Breast epithelium (tissue), 4 donors: ENCODE measurements at regions of chr4 and their contacts with region 1.

Region 1: GRCh38 chr4:114603497-114603896 is 4.9 kb downstream of the UGT8 start:
- DNase-seq: no peak
- H3K4me3 ChIP-seq: no peak overlapping the region
- H3K27ac ChIP-seq: no peak overlapping the region
- H3K4me1 ChIP-seq: no peaks in the 10 kb centered on the region
- H3K27me3 ChIP-seq: peaks cover 0 to 5% of the 10 kb centered on the region in 2 donors
- CTCF ChIP-seq: no peak
- POLR2A ChIP-seq: no peak

Region 2: GRCh38 chr4:114025176-114025777 is 578.2 kb before region 1 on chr4:
- intact Hi-C with region 1: no loop called
- DNase-seq: no peak
- H3K4me3 ChIP-seq: no peak overlapping the region
- H3K27ac ChIP-seq: no peak overlapping the region
- H3K4me1 ChIP-seq: no peaks in the 10 kb centered on the region
- H3K27me3 ChIP-seq: no peaks in the 10 kb centered on the region
- CTCF ChIP-seq: no peak
- POLR2A ChIP-seq: no peak

Region 3: DNA sequence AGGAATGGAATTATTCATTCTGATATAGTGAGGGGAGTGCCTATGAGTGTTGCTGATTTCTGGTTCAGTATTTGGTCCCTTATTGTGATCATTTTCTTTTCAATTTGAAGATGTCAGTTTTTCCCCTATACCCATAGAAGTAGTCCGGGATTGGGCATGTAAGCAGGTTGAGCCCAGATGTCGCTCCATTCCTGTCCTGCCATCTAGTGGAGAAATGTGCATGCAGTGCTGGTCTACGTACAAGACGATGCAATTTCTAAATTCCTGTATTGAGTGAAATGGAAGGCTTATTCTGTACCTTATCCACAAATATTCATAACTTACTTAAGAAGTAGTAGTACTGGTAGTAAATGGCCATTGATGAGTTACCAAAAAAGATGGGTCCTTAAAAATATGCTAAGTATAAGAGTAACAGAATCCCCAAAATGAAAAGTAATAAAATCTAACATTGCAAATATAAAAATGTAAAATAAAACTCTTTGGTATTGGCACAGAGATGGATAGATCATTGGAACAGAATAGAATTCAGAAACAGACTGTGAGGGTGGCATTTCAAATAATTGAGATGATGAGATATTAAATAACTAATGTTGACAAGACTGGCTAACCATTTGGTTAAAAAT is 56.0 kb after region 1 on chr4:
- intact Hi-C with region 1: no loop called
- DNase-seq: peak; percentile 47 to 52
- H3K4me3 ChIP-seq: no peak overlapping the region
- H3K27ac ChIP-seq: no peak overlapping the region
- H3K4me1 ChIP-seq: no peaks in the 10 kb centered on the region
- H3K27me3 ChIP-seq: no peaks in the 10 kb centered on the region
- CTCF ChIP-seq: peak; percentile 29 to 54 (median 52)
- POLR2A ChIP-seq: no peak

Region 4: DNA sequence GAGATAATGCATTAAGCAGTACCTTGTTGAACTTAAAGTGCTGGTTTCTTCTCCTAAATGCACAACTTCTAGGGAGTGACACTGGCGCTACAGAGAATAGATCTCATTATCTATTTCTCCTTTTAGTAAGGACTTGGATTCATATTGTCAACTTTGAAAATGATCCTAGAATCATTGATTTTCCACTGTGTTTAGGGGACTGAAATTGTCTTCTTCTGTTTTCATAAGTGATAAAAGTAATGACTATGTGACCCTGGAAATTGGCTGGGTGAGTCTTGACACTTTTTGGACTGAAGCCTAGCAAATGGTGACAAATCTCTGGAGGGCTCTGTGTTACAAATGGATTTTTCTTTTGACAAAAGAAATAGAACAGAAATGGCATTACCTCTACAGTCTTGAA is 342.1 kb after region 1 on chr4:
- intact Hi-C with region 1: loop called (anchors 5 kb)
- DNase-seq: no peak
- H3K4me3 ChIP-seq: no peak overlapping the region
- H3K27ac ChIP-seq: no peak overlapping the region
- H3K4me1 ChIP-seq: no peaks in the 10 kb centered on the region
- H3K27me3 ChIP-seq: no peaks in the 10 kb centered on the region
- CTCF ChIP-seq: no peak
- POLR2A ChIP-seq: no peak

Region 5: DNA sequence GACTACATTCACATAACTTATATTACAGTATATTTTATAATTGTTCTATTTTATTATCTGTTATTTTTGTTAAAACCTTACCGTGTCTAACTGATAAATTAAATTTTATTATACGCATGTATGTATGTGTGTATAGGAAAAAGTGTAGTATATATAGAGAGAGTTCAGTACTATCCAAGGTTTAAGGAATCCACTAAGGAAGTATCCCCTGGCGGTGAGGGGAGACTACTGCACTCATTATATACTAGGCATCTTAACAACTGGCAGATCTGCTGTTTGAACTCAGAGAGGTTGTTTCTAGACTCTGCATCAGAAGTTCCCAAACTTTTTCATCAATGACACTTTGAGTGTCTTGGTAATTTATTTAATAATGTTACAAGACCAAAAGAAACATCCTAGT is 439.0 kb after region 1 on chr4:
- intact Hi-C with region 1: no loop called
- DNase-seq: no peak
- H3K4me3 ChIP-seq: no peak overlapping the region
- H3K27ac ChIP-seq: no peak overlapping the region
- H3K4me1 ChIP-seq: no peaks in the 10 kb centered on the region
- H3K27me3 ChIP-seq: no peaks in the 10 kb centered on the region
- CTCF ChIP-seq: no peak
- POLR2A ChIP-seq: no peak

Region 6: GRCh38 chr4:115484479-115484878 is 881.0 kb after region 1 on chr4:
- intact Hi-C with region 1: no loop called
- DNase-seq: no peak
- H3K4me3 ChIP-seq: no peak overlapping the region
- H3K27ac ChIP-seq: no peak overlapping the region
- H3K4me1 ChIP-seq: no peaks in the 10 kb centered on the region
- H3K27me3 ChIP-seq: no peaks in the 10 kb centered on the region
- CTCF ChIP-seq: no peak
- POLR2A ChIP-seq: no peak